K562 (cell line): ENCODE measurements at regions of chr1 and their contacts with region 1.

Region 1: DNA sequence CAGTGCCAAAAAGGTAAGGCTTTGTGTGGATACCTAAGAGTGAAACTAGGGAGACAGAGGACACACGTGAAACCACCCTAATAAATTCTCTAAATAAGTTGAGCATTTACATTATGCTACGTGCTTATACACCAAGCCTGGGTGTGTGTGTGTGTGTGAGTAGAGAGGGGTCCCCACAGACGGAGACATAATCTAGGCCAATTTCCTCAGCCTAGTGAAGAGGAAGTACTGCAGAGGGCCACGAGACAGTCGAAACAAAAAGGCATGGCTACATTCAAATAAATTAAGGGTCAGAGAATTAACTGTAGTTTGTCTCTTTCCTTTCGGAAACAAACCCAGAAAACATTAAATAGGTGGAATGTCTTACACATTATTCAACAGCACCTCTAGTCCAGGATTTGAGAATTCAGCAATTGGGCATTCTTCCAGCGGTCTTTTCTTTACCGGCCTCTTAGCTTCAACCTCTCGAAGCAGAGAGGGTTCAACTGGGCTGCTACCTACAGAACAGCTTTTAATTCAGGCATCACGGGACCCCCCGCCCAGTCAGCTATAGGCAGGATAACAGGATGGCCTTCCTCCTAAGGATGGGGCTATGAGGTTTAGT is 75.0 kb downstream of the DESI2 start:
- DNase-seq: peak in 1 of 4 experiments; percentile 4
- ATAC-seq: peak; percentile 41; the same call in 1 of the 3 replicates
- H3K4me3 ChIP-seq: no peak overlapping the region
- H3K27ac ChIP-seq: no peak overlapping the region
- H3K4me1 ChIP-seq: peaks cover 0 to 4% of the 10 kb centered on the region in 2 experiments; a peak in 1 of 5 replicates
- H3K27me3 ChIP-seq: peaks cover 40 to 80% of the 10 kb centered on the region in 2 experiments; a peak in 4 of 5 replicates
- CTCF ChIP-seq: no peak
- EP300 ChIP-seq: no peak
- POLR2A ChIP-seq: no peak
- RAD21 ChIP-seq: no peak

Region 2: DNA sequence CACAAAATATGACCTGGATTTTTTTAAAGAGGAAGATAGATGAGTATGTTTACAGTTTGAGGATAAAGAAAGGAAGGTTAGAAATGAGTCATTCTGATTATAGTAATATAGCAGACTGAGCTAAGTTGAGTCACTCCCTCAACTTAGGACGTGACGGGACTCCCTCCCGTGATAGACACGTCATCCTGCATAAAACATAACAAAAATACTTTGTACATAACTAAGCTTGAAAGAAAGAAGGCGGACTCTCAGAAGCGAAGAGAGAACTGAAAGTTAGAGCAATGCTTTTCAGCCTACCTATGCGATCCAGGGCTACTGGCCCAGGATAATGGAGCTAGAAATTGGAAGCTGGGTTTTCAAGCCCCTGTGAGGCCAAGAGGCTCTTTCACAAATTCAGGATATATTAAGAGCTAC is 128.0 kb before region 1 on chr1:
- CTCF ChIA-PET with region 1: no interaction called
- POLR2A ChIA-PET with region 1: no interaction called
- in situ Hi-C with region 1: no loop called
- intact Hi-C with region 1: loop called (anchors 5 kb)
- DNase-seq: peak; percentile 22 to 50 (median 26)
- ATAC-seq: peak; percentile 33
- H3K4me3 ChIP-seq: no peak overlapping the region
- H3K27ac ChIP-seq: no peak overlapping the region
- H3K4me1 ChIP-seq: no peaks in the 10 kb centered on the region; a peak in 2 of 5 replicates
- H3K27me3 ChIP-seq: peaks cover 23 to 37% of the 10 kb centered on the region in 2 experiments
- CTCF ChIP-seq: no peak
- EP300 ChIP-seq: peak; percentile 23; the same call in 1 of the 2 replicates
- POLR2A ChIP-seq: no peak
- RAD21 ChIP-seq: no peak